Activated naive CD4-positive, alpha-beta T cell treated with anti-CD3 and anti-CD28 coated beads for 36 hours (primary cell): ENCODE measurements at regions of chr7 and their contacts with region 1.

Region 1: GRCh38 chr7:135509903-135510602 is at the start of gene CNOT4:
- DNase-seq: peak; percentile 97
- H3K4me3 Mint-ChIP-seq: no peak within 1 kb of the TSS
- H3K27ac Mint-ChIP-seq: no peak within 1 kb of the TSS
- H3K4me1 Mint-ChIP-seq: peaks cover 22% of the 10 kb centered on the region
- H3K27me3 Mint-ChIP-seq: no peaks in the 10 kb centered on the region
- total RNA-seq, gene CNOT4: 16.6 to 20.3 TPM

Region 2: GRCh38 chr7:134669845-134670373 is 840.1 kb before region 1 on chr7:
- CTCF ChIA-PET with region 1: no interaction called
- intact Hi-C with region 1: no loop called
- DNase-seq: peak; percentile 88
- H3K4me3 Mint-ChIP-seq: peak overlapping the region; percentile 65
- H3K27ac Mint-ChIP-seq: peak overlapping the region; percentile 85
- H3K4me1 Mint-ChIP-seq: peaks cover 52% of the 10 kb centered on the region
- H3K27me3 Mint-ChIP-seq: no peaks in the 10 kb centered on the region

Region 3: GRCh38 chr7:134986363-134987251 is 523.4 kb before region 1 on chr7 and contains the start of gene AGBL3:
- CTCF ChIA-PET with region 1: no interaction called
- intact Hi-C with region 1: loop called (anchors 2 kb)
- DNase-seq: peak; percentile 97
- H3K4me3 Mint-ChIP-seq: peak within 1 kb of the TSS; percentile 96
- H3K27ac Mint-ChIP-seq: peak within 1 kb of the TSS; percentile 98
- H3K4me1 Mint-ChIP-seq: peaks cover 32% of the 10 kb centered on the region
- H3K27me3 Mint-ChIP-seq: no peaks in the 10 kb centered on the region
- total RNA-seq, gene AGBL3: 2.6 to 3.6 TPM

Region 4: DNA sequence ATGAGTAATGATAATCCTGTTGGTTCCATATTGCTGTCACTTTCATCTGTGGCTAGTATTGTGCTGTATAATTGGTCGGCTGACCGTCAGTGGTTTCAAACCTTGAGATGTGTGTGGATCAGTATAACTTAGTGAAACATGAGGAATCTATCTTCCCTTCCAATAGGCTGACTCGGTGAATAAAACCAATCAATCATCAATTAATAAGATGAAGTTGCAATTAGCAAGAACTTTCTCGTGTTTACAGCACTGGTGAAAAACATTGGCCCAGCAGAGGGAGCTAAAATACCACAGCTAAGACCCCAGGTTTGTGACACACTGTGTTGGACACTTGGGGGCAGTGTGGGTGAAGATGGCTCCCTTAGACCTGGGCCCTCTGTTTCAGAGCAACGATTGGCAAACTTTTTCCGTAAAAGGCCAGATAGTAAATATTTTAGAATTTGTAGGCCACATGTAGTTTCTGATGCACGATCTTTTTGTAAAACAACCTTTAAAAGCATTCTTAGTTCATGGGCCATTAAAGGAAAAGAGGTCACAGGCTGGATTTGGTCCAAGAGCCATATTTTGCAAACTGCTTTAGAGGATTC is 228.6 kb before region 1 on chr7:
- CTCF ChIA-PET with region 1: interaction called, 4 read pairs
- intact Hi-C with region 1: loop called (anchors 1 kb)
- DNase-seq: peak; percentile 93
- H3K4me3 Mint-ChIP-seq: no peak overlapping the region
- H3K27ac Mint-ChIP-seq: no peak overlapping the region
- H3K4me1 Mint-ChIP-seq: peaks cover 6% of the 10 kb centered on the region
- H3K27me3 Mint-ChIP-seq: peaks cover 5% of the 10 kb centered on the region

Region 5: DNA sequence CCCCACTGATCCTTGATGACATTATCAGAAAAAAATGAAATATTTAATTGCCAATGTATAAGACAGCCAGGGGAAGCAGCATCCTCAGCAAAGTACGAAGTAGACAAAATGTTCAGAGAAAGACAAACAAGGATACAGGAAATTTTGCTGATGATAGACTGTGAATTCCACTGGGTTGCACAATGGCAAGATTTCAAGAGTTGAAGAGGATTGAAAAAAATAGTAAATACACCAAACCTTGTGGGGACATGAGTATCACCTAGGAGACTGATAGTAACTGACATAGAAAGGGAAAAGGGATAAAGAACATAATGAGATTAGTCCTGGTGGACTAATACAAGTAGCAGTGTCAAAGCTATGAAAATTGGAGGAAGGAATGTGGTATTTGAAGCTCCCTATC is 16.7 kb before region 1 on chr7:
- CTCF ChIA-PET with region 1: no interaction called
- intact Hi-C with region 1: no loop called
- DNase-seq: no peak
- H3K4me3 Mint-ChIP-seq: no peak overlapping the region
- H3K27ac Mint-ChIP-seq: no peak overlapping the region
- H3K4me1 Mint-ChIP-seq: peaks cover 17% of the 10 kb centered on the region
- H3K27me3 Mint-ChIP-seq: no peaks in the 10 kb centered on the region

Region 6: DNA sequence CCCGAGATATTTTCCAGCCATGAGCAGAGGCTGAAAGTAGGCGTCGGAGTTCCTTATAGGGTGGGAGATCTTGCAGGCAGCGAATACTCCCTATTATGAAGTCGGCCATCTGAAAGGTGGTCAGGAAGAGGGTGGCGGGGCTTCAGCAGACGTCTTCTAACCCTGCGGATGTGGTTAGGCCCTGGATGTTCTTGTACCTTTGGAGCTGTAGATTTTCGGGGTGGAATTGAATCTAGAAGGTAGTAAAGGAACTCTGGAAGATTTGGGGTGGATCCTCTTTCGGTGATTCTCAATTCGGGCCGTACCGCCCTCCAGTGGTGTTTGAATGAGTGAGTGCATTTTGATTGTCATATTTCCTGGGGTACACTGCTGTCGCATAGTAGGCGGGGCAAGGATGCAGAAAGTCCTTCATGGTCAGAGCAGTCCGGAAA is 48.3 kb after region 1 on chr7:
- CTCF ChIA-PET with region 1: no interaction called
- intact Hi-C with region 1: loop called (anchors 1 kb)
- DNase-seq: peak; percentile 79
- H3K4me3 Mint-ChIP-seq: no peak overlapping the region
- H3K27ac Mint-ChIP-seq: no peak overlapping the region
- H3K4me1 Mint-ChIP-seq: peaks cover 29% of the 10 kb centered on the region
- H3K27me3 Mint-ChIP-seq: no peaks in the 10 kb centered on the region

Region 7: GRCh38 chr7:135795846-135796570 is 286.0 kb after region 1 on chr7:
- CTCF ChIA-PET with region 1: no interaction called
- intact Hi-C with region 1: loop called (anchors 5 kb)
- DNase-seq: no peak
- H3K4me3 Mint-ChIP-seq: no peak overlapping the region
- H3K27ac Mint-ChIP-seq: no peak overlapping the region
- H3K4me1 Mint-ChIP-seq: no peaks in the 10 kb centered on the region
- H3K27me3 Mint-ChIP-seq: peaks cover 10% of the 10 kb centered on the region

Region 8: GRCh38 chr7:136030862-136031318 is 520.8 kb after region 1 on chr7:
- CTCF ChIA-PET with region 1: no interaction called
- intact Hi-C with region 1: loop called (anchors 1 kb)
- DNase-seq: peak; percentile 38
- H3K4me3 Mint-ChIP-seq: no peak overlapping the region
- H3K27ac Mint-ChIP-seq: peak overlapping the region; percentile 80
- H3K4me1 Mint-ChIP-seq: peaks cover 59% of the 10 kb centered on the region
- H3K27me3 Mint-ChIP-seq: peaks cover 13% of the 10 kb centered on the region